ENCODE measurements at regions of chr7 and their contacts with region 1.

Region 1: GRCh38 chr7:45923290-45923689 is 2.2 kb upstream of the IGFBP3 start:
- DNase-seq: no peak
- H3K4me3 ChIP-seq: no peak overlapping the region
- CTCF ChIP-seq: peak; percentile 87

Region 2: GRCh38 chr7:45938626-45939302 is 15.5 kb after region 1 on chr7:
- CTCF ChIA-PET with region 1: interaction called, 28 read pairs
- POLR2A ChIA-PET with region 1: no interaction called
- DNase-seq: no peak
- H3K4me3 ChIP-seq: no peak overlapping the region
- CTCF ChIP-seq: no peak

Region 3: GRCh38 chr7:46126675-46127300 is 203.5 kb after region 1 on chr7:
- CTCF ChIA-PET with region 1: interaction called, 37 read pairs
- POLR2A ChIA-PET with region 1: no interaction called
- DNase-seq: no peak
- H3K4me3 ChIP-seq: no peak overlapping the region
- CTCF ChIP-seq: no peak

Region 4: GRCh38 chr7:46153951-46154787 is 230.9 kb after region 1 on chr7:
- CTCF ChIA-PET with region 1: interaction called, 12 read pairs
- POLR2A ChIA-PET with region 1: interaction called, 3 read pairs
- DNase-seq: no peak
- H3K4me3 ChIP-seq: no peak overlapping the region
- CTCF ChIP-seq: no peak

Region 5: DNA sequence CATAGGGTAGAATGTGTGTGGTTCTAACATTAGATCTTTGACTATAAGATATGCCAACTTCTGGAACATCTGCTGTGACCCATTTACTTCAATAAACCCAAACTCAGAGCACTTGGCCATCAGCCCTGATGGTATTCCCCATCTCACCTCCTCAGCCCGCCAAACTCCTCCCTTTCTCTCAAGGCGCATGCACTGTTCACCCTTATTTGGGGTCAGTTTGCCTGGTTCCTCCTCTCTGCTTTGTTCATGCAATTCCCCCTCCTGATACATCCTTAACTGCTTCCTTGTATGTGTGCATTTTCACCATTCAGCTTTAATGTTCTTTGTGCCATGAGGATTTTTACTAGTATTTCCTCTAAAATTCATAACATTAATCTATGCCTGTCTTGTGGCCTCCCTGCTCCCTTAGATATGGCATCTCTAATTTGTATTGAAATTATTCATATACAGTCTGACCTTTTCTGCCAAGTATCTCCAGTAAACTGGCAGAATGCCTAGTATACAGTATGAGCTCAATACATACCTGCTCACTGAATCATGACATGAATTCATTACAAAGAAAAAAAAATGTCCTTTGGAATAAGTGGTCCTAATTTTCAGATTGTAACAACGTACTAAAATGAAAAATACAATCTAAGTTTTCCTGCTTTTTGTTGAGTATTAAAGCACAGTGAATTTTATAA is 334.6 kb after region 1 on chr7:
- CTCF ChIA-PET with region 1: interaction called, 14 read pairs
- POLR2A ChIA-PET with region 1: no interaction called
- DNase-seq: peak; percentile 83
- H3K4me3 ChIP-seq: no peak overlapping the region
- CTCF ChIP-seq: no peak

Region 6: DNA sequence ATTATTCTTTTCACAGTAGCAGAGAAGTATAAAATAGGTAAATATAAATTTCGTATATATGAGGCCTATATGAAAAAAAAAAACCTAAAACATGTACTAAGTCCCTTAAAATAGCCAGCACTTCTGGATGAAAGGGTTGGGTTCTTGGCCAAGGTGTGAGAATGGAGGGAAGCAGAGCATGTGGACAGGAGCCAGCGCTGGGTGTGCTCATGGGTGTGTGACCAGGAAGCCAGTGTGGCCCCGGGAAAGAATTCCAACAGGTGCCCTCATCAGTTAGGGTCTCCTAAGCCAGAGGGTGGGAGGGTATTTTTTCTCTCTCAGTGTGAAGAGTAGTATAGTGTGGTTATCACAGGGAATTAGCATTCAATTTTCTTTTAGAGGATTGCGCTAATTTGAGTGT is 399.6 kb after region 1 on chr7:
- CTCF ChIA-PET with region 1: interaction called, 10 read pairs
- POLR2A ChIA-PET with region 1: no interaction called
- DNase-seq: no peak
- H3K4me3 ChIP-seq: no peak overlapping the region
- CTCF ChIP-seq: no peak

Region 7: GRCh38 chr7:46385662-46386309 is 462.5 kb after region 1 on chr7:
- CTCF ChIA-PET with region 1: interaction called, 14 read pairs
- POLR2A ChIA-PET with region 1: no interaction called
- DNase-seq: peak; percentile 95
- H3K4me3 ChIP-seq: no peak overlapping the region
- CTCF ChIP-seq: no peak